ENCODE measurements at regions of chr5 and their contacts with region 1.

Region 1: GRCh38 chr5:3185488-3185887 is 410.1 kb upstream of the IRX1 start:
- DNase-seq: no peak
- ATAC-seq: no peak
- H3K4me3 ChIP-seq: no peak overlapping the region
- H3K27ac ChIP-seq: no peak overlapping the region
- H3K4me1 ChIP-seq: no peaks in the 10 kb centered on the region
- H3K27me3 ChIP-seq: no peaks in the 10 kb centered on the region
- CTCF ChIP-seq: no peak
- POLR2A ChIP-seq: no peak
- RAD21 ChIP-seq: no peak

Region 2: DNA sequence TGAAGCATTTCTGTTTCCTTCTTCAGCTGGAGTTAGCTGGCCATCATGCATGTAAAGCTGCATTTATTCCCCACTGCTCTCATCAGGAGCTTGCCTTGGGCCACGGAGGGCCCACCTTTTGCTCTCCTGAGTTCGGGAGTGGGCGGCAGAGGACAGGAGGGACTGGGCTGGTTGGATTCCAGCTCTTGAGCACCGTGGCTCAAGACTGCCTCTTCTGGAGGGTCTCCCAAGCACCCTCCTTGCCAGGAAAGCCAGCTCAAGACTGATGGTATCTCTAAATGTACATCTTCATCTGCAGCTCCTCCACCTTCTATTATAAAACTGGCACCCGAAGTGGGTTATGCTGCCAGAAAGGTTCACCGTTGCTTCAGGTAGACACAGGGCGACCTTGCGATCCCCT is 10.5 kb after region 1 on chr5:
- CTCF ChIA-PET with region 1: no interaction called
- POLR2A ChIA-PET with region 1: interaction called, 11 read pairs
- dilution Hi-C with region 1: no loop called
- in situ Hi-C with region 1: no loop called
- intact Hi-C with region 1: no loop called
- DNase-seq: no peak
- ATAC-seq: no peak
- H3K4me3 ChIP-seq: no peak overlapping the region
- H3K27ac ChIP-seq: no peak overlapping the region
- H3K4me1 ChIP-seq: no peaks in the 10 kb centered on the region
- H3K27me3 ChIP-seq: no peaks in the 10 kb centered on the region
- CTCF ChIP-seq: no peak
- POLR2A ChIP-seq: no peak
- RAD21 ChIP-seq: no peak

Measured in IMR-90 (cell line).